ENCODE measurements at regions of chr15 and their contacts with region 1.

Region 1: GRCh38 chr15:52139599-52140491 is 27.3 kb upstream of the BCL2L10 start:
- DNase-seq: peak; percentile 56
- H3K4me3 ChIP-seq: no peak overlapping the region
- H3K27ac ChIP-seq: no peak overlapping the region
- H3K4me1 ChIP-seq: no peaks in the 10 kb centered on the region
- H3K27me3 ChIP-seq: no peaks in the 10 kb centered on the region
- CTCF ChIP-seq: peak; percentile 66 to 85 (median 70)
- POLR2A ChIP-seq: no peak

Region 2: GRCh38 chr15:51888593-51889195 is 251.2 kb before region 1 on chr15:
- intact Hi-C with region 1: loop called (anchors 5 kb)
- DNase-seq: no peak
- H3K4me3 ChIP-seq: no peak overlapping the region
- H3K27ac ChIP-seq: no peak overlapping the region
- H3K4me1 ChIP-seq: no peaks in the 10 kb centered on the region
- H3K27me3 ChIP-seq: no peaks in the 10 kb centered on the region
- CTCF ChIP-seq: peak in 3 of 4 experiments; percentile 55 to 71 (median 63)
- POLR2A ChIP-seq: no peak